Transverse colon (tissue), 4 donors: ENCODE measurements at regions of chr19 and their contacts with region 1.

Region 1: DNA sequence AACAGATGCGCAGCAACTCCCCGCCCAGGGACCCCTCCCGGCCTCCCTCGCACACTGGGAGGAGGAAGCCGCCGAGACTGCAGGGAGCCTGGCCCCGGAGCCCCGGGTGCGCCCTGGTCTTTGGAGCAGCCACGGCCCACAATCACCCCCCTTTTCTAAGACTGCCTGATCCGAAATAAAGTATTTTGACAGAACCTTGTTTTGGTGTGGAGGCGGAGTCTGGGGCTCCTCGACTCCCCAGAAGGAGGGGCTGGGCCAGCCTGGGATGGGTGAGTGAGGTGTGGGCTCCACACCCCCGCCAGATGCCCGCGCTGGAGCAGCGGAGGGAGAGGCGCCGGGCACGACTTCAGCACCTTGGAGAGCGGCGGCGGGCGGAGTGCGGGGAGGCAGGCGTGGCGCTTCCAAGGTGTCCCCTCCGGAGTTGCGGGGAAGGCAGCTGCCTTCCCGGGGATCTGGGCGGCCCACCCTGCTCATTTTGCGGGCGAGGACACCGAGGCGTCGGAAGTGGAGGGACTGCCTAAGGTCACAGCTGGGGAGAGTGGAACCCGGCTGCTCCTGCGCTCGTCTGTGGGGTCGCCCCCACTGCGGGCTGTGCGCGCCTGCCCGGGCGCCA is 9.4 kb downstream of the SIRT6 start:
- DNase-seq: peak; percentile 72
- H3K4me3 ChIP-seq: no peak overlapping the region
- H3K27ac ChIP-seq: no peak overlapping the region
- H3K4me1 ChIP-seq: peaks cover 0 to 24% (median 23%) of the 10 kb centered on the region in 4 donors
- H3K27me3 ChIP-seq: peaks cover 27% of the 10 kb centered on the region
- CTCF ChIP-seq: no peak
- EP300 ChIP-seq: no peak
- POLR2A ChIP-seq: no peak

Region 2: DNA sequence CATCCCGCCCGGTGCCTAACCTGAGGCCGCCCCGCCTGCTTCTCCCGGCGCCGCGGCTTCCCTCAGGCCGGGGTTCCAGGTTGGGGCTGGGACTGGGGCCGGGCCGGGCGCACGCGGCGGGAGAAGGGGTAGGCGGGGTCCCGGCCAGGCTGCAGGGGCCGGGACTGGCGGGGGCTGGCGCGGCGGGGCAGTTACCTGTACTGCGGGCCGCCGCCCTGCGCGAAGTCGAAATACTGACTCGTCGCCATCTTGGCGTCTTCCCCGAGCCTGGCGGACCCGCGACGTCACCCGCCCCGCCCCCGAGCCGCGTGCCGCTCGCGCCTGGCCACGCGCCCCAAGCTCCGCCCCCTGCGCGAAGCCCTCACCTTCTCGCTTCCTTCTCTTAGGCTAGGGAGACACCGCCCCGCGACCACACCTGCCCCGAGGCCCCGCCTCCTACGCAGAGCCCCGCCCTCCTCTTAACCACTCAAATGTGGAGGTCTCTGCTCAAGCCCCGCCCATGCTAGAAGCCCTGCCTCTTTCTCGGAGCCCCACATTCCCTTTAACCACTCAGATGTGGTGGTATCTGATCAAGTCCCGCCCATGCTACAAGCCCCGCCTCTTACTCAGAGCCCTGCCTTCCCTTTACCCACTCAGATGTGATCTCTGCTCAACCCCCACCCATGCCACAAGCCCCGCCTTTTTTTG is 304.1 kb before region 1 on chr19 and contains the start of gene ZFR2:
- in situ Hi-C with region 1: no loop called
- intact Hi-C with region 1: no loop called
- DNase-seq: no peak
- H3K4me3 ChIP-seq: peak within 1 kb of the TSS in 1 of 4 donors; percentile 18
- H3K27ac ChIP-seq: no peak within 1 kb of the TSS
- H3K4me1 ChIP-seq: peaks cover 0 to 4% (median 0%) of the 10 kb centered on the region in 4 donors
- H3K27me3 ChIP-seq: peaks cover 57% of the 10 kb centered on the region
- CTCF ChIP-seq: no peak
- EP300 ChIP-seq: no peak
- POLR2A ChIP-seq: no peak
- total RNA-seq, gene ZFR2: not detected

Region 3: GRCh38 chr19:4134351-4134750 is 38.6 kb before region 1 on chr19:
- in situ Hi-C with region 1: no loop called
- intact Hi-C with region 1: loop called (anchors 1 kb)
- DNase-seq: no peak
- H3K4me3 ChIP-seq: no peak overlapping the region
- H3K27ac ChIP-seq: no peak overlapping the region
- H3K4me1 ChIP-seq: peaks cover 0 to 41% (median 21%) of the 10 kb centered on the region in 4 donors
- H3K27me3 ChIP-seq: no peaks in the 10 kb centered on the region
- CTCF ChIP-seq: no peak
- EP300 ChIP-seq: no peak
- POLR2A ChIP-seq: no peak

Region 4: GRCh38 chr19:4310247-4311121 is 137.5 kb after region 1 on chr19:
- in situ Hi-C with region 1: no loop called
- intact Hi-C with region 1: no loop called
- DNase-seq: peak; percentile 23
- H3K4me3 ChIP-seq: no peak overlapping the region
- H3K27ac ChIP-seq: no peak overlapping the region
- H3K4me1 ChIP-seq: peaks cover 0 to 14% (median 0%) of the 10 kb centered on the region in 4 donors
- H3K27me3 ChIP-seq: peaks cover under 1% of the 10 kb centered on the region
- CTCF ChIP-seq: no peak
- EP300 ChIP-seq: no peak
- POLR2A ChIP-seq: no peak